HCT116 (cell line): ENCODE measurements at regions of chr12 and their contacts with region 1.

Region 1: GRCh38 chr12:49347384-49348237 is 923 bp downstream of the DNAJC22 start:
- DNase-seq: peak; percentile 89
- ATAC-seq: peak; percentile 95
- H3K4me3 ChIP-seq: peak overlapping the region; percentile 73 to 80
- H3K27ac ChIP-seq: peak overlapping the region; percentile 80
- H3K4me1 ChIP-seq: peaks cover 37 to 46% of the 10 kb centered on the region in 2 experiments
- H3K27me3 ChIP-seq: no peaks in the 10 kb centered on the region
- CTCF ChIP-seq: peak in 2 of 3 experiments; percentile 88 to 96; a peak in 4 of 6 replicates
- POLR2A ChIP-seq: peak; percentile 57
- RAD21 ChIP-seq: no peak

Region 2: GRCh38 chr12:48977315-48978281 is 370.0 kb before region 1 on chr12:
- CTCF ChIA-PET with region 1: no interaction called
- POLR2A ChIA-PET with region 1: no interaction called
- RAD21 ChIA-PET with region 1: no interaction called
- intact Hi-C with region 1: no loop called
- DNase-seq: no peak
- ATAC-seq: peak; percentile 88
- H3K4me3 ChIP-seq: no peak overlapping the region
- H3K27ac ChIP-seq: no peak overlapping the region
- H3K4me1 ChIP-seq: peaks cover 3 to 12% of the 10 kb centered on the region in 2 experiments; a peak in 3 of 4 replicates
- H3K27me3 ChIP-seq: peaks cover 3% of the 10 kb centered on the region; the same call in 1 of the 2 replicates
- CTCF ChIP-seq: peak; percentile 73 to 94 (median 87)
- POLR2A ChIP-seq: no peak
- RAD21 ChIP-seq: peak; percentile 43

Region 3: DNA sequence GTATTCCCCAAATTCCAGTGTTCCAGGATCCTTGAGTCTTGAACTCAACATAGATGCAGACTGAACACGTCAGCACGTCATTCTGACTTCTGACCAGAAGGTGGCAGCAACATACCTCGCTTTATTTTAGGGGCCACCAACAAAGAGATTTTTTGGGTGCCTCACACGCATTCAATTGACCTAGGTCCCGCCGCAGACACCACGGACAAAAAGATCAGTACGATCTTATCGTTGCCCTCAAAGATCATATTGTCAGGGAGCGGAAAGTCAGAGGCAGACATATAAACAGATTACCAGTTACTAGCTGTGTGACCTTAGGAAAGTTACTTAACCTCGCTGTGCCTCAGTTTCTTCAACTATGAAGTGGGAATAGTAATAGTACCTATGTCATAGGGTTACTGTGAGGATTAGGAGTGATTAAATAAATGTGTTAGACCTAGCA is 59.2 kb before region 1 on chr12:
- CTCF ChIA-PET with region 1: interaction called, 44 read pairs
- POLR2A ChIA-PET with region 1: interaction called, 3 read pairs
- RAD21 ChIA-PET with region 1: interaction called in 1 of 2 experiments, 4 read pairs
- intact Hi-C with region 1: loop called (anchors 1 kb)
- DNase-seq: peak; percentile 46
- ATAC-seq: peak; percentile 74
- H3K4me3 ChIP-seq: no peak overlapping the region
- H3K27ac ChIP-seq: no peak overlapping the region
- H3K4me1 ChIP-seq: peaks cover 0 to 10% of the 10 kb centered on the region in 2 experiments; a peak in 2 of 4 replicates
- H3K27me3 ChIP-seq: no peaks in the 10 kb centered on the region
- CTCF ChIP-seq: peak; percentile 76 to 97 (median 89)
- POLR2A ChIP-seq: no peak
- RAD21 ChIP-seq: peak; percentile 92

Region 4: GRCh38 chr12:49322708-49323523 is 24.7 kb before region 1 on chr12 and contains the start of gene TROAP:
- CTCF ChIA-PET with region 1: interaction called, 30 read pairs
- POLR2A ChIA-PET with region 1: interaction called, 6 read pairs
- RAD21 ChIA-PET with region 1: no interaction called
- intact Hi-C with region 1: no loop called
- DNase-seq: peak; percentile 97
- ATAC-seq: peak; percentile 96
- H3K4me3 ChIP-seq: peak within 1 kb of the TSS; percentile 72 to 99
- H3K27ac ChIP-seq: peak within 1 kb of the TSS; percentile 70
- H3K4me1 ChIP-seq: peaks cover 8 to 14% of the 10 kb centered on the region in 2 experiments
- H3K27me3 ChIP-seq: no peaks in the 10 kb centered on the region
- CTCF ChIP-seq: no peak
- POLR2A ChIP-seq: peak; percentile 51
- RAD21 ChIP-seq: no peak
- total RNA-seq, gene TROAP: 99.1 TPM

Region 5: GRCh38 chr12:49336645-49337584 is 10.7 kb before region 1 on chr12 and contains the start of gene C1QL4:
- CTCF ChIA-PET with region 1: interaction called, 45 read pairs
- POLR2A ChIA-PET with region 1: interaction called, 8 read pairs
- RAD21 ChIA-PET with region 1: interaction called, 4 to 6 read pairs
- intact Hi-C with region 1: no loop called
- DNase-seq: peak; percentile 33
- ATAC-seq: peak; percentile 88
- H3K4me3 ChIP-seq: peak within 1 kb of the TSS; percentile 51 to 64
- H3K27ac ChIP-seq: peak within 1 kb of the TSS; percentile 34; the same call in 1 of the 2 replicates
- H3K4me1 ChIP-seq: peaks cover 13 to 38% of the 10 kb centered on the region in 2 experiments
- H3K27me3 ChIP-seq: no peaks in the 10 kb centered on the region
- CTCF ChIP-seq: peak; percentile 67 to 90 (median 90); a peak in 5 of 6 replicates
- POLR2A ChIP-seq: peak; percentile 35
- RAD21 ChIP-seq: peak; percentile 49; the same call in 1 of the 2 replicates
- total RNA-seq, gene C1QL4: 8.1 TPM

Region 6: DNA sequence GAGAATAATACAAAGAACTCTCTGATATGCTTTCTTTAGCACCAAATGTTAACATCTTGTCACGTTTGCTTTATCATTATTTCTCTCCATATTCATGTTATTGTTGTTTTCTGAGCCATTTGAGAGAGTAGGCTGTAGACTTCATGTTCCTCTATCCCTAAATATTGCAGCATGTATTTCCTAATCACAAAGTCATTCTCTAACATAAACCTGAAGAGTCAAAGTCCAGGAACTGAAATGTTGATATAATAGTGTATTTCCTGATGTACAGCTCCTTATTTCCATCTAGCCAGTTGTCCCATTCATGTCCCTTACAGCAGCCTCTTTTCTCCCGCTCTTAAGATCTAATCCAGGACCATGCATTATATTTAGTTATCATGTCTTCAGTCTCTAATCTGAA is 92.4 kb after region 1 on chr12:
- CTCF ChIA-PET with region 1: no interaction called
- POLR2A ChIA-PET with region 1: no interaction called
- RAD21 ChIA-PET with region 1: no interaction called
- intact Hi-C with region 1: no loop called
- DNase-seq: no peak
- ATAC-seq: no peak
- H3K4me3 ChIP-seq: no peak overlapping the region
- H3K27ac ChIP-seq: no peak overlapping the region
- H3K4me1 ChIP-seq: no peaks in the 10 kb centered on the region
- H3K27me3 ChIP-seq: no peaks in the 10 kb centered on the region
- CTCF ChIP-seq: no peak
- POLR2A ChIP-seq: no peak
- RAD21 ChIP-seq: no peak

Region 7: GRCh38 chr12:49515266-49515665 is 167.7 kb after region 1 on chr12:
- CTCF ChIA-PET with region 1: interaction called, 10 read pairs
- POLR2A ChIA-PET with region 1: interaction called, 3 read pairs
- RAD21 ChIA-PET with region 1: interaction called in 1 of 2 experiments, 6 read pairs
- intact Hi-C with region 1: no loop called
- DNase-seq: no peak
- ATAC-seq: peak; percentile 73
- H3K4me3 ChIP-seq: peak overlapping the region in 1 of 2 experiments; percentile 36; a peak in 2 of 4 replicates
- H3K27ac ChIP-seq: peak overlapping the region; percentile 95
- H3K4me1 ChIP-seq: peaks cover 84% of the 10 kb centered on the region in 2 experiments
- H3K27me3 ChIP-seq: no peaks in the 10 kb centered on the region
- CTCF ChIP-seq: no peak
- POLR2A ChIP-seq: no peak
- RAD21 ChIP-seq: peak; percentile 17; the same call in 1 of the 2 replicates